ENCODE measurements at regions of chr19 and their contacts with region 1.

Region 1: DNA sequence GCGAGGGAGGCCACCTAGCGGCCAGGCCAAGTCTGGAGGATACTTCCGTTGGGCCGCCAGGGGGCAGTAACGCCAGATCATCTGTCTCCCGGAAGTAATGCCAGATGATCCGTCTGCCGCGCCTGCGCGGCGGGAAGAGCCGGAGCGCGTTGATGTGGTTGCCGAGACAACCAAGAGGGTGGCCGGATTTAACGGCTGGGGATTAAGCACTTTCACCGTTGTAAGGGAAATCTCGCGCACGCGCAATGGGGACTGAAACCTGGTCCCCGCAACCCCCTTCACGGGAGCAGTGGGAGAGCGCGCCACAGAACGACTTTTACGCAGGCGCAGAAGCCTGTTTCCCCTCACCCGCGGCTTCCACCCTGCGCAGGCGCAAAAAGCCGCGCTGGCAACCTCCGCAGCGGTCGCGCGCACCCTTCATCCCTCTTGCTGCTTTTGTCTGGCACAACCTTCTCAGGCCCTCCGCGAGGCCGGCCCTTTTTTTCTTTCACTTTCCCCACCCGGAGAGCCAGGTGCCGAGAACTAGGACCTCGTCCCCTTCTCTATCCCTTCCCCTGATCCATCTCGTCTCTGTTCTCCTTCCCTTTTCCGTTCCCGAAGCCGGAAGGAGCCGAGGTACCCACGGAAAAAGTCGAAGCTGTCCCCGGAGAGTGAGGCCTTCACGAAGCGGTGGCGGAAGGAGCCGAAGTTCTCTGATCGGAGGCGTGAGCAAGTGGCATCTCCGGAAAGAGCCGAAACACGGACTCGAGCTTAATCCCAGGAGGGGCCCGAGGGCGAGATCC is 886 bp upstream of the U2AF2 start:
- DNase-seq: peak; percentile 100
- H3K4me3 ChIP-seq: peak overlapping the region; percentile 78 to 100 (median 92)
- H3K27ac ChIP-seq: peak overlapping the region; percentile 97 to 100 (median 98)
- H3K4me1 ChIP-seq: peaks cover 48 to 68% (median 56%) of the 10 kb centered on the region in 4 donors
- H3K27me3 ChIP-seq: no peaks in the 10 kb centered on the region
- CTCF ChIP-seq: peak; percentile 88 to 100 (median 97)
- EP300 ChIP-seq: no peak
- POLR2A ChIP-seq: peak; percentile 62

Region 2: DNA sequence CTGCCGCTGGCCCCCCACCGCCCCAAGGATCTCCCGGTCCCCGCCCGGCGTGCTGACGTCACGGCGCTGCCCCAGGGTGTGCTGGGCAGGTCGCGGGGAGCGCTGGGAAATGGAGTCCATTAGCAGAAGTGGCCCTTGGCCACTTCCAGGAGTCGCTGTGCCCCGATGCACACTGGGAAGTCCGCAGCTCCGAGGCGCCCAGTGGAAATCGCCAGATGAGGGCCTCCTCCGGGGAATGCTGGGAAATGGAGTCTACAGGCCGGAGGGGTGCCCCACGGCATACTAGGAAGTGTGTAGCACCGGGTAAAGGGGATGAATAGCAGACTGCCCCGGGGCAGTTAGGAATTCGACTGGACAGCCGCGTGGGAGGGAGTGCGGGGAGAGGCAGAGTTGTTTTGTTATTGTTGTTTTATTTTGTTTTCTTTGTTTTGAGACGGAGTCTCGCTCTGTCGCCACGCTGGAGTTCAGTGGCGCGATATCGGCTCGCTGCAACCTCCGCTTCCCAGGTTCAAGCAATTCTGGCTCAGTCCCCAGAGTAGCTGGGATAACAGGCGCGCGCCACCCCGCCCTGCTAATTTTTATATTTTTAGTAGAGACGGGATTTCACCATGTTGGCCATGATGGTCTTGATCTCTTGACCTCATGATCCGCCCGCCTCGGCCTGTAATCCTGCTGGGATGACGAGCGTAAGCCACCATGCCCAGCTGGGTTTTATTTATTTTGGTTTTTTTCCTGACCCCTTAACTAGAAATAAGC is 536.1 kb before region 1 on chr19 and contains the start of gene PPP1R12C:
- intact Hi-C with region 1: loop called (anchors 10 kb)
- DNase-seq: peak; percentile 99
- H3K4me3 ChIP-seq: peak within 1 kb of the TSS; percentile 90 to 98 (median 90)
- H3K27ac ChIP-seq: peak within 1 kb of the TSS; percentile 96 to 99 (median 97)
- H3K4me1 ChIP-seq: peaks cover 42 to 51% (median 48%) of the 10 kb centered on the region in 4 donors
- H3K27me3 ChIP-seq: no peaks in the 10 kb centered on the region
- CTCF ChIP-seq: peak in 1 of 3 experiments; percentile 41
- EP300 ChIP-seq: no peak
- POLR2A ChIP-seq: no peak
- total RNA-seq, gene PPP1R12C: 257 to 451 (median 351) TPM

Region 3: GRCh38 chr19:55599468-55600279 is 54.3 kb before region 1 on chr19 and contains the start of gene FIZ1:
- intact Hi-C with region 1: no loop called
- DNase-seq: peak; percentile 100
- H3K4me3 ChIP-seq: peak within 1 kb of the TSS; percentile 72 to 87 (median 84)
- H3K27ac ChIP-seq: peak within 1 kb of the TSS; percentile 95 to 98 (median 96)
- H3K4me1 ChIP-seq: peaks cover 16 to 45% (median 28%) of the 10 kb centered on the region in 4 donors
- H3K27me3 ChIP-seq: no peaks in the 10 kb centered on the region
- CTCF ChIP-seq: no peak
- EP300 ChIP-seq: no peak
- POLR2A ChIP-seq: no peak
- total RNA-seq, gene FIZ1: 8.3 to 17.3 (median 11.4) TPM

Region 4: GRCh38 chr19:55632463-55632834 is 21.5 kb before region 1 on chr19:
- intact Hi-C with region 1: loop called (anchors 2 kb)
- DNase-seq: peak; percentile 99
- H3K4me3 ChIP-seq: no peak overlapping the region
- H3K27ac ChIP-seq: peak overlapping the region; percentile 57 to 68 (median 62)
- H3K4me1 ChIP-seq: peaks cover 25 to 44% (median 38%) of the 10 kb centered on the region in 4 donors
- H3K27me3 ChIP-seq: no peaks in the 10 kb centered on the region
- CTCF ChIP-seq: peak; percentile 89 to 97 (median 90)
- EP300 ChIP-seq: no peak
- POLR2A ChIP-seq: no peak

Region 5: DNA sequence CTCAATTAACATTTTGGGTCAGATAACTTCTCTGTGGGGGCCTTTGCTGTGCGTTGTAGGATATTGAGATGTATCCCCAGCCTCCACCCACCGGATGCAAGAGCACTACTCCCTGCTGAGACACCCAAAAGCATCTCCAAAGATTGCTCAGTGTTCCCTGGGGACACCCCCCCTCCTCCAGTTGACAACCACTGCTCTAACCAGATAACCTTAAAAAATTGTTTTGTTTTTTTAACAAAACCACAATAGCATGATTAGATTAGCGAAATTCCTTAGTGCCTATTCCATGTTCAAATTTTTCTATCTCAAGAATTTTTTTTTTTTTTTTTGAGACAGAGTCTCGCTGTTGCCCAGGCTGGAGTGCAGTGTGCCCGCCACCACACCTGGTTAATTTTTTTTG is 18.5 kb after region 1 on chr19:
- intact Hi-C with region 1: loop called (anchors 2 kb)
- DNase-seq: no peak
- H3K4me3 ChIP-seq: no peak overlapping the region
- H3K27ac ChIP-seq: no peak overlapping the region
- H3K4me1 ChIP-seq: peaks cover 26 to 58% (median 41%) of the 10 kb centered on the region in 4 donors
- H3K27me3 ChIP-seq: no peaks in the 10 kb centered on the region
- CTCF ChIP-seq: no peak
- EP300 ChIP-seq: no peak
- POLR2A ChIP-seq: no peak